CD14-positive monocyte (primary cell): ENCODE measurements at regions of chr11 and their contacts with region 1.

Region 1: DNA sequence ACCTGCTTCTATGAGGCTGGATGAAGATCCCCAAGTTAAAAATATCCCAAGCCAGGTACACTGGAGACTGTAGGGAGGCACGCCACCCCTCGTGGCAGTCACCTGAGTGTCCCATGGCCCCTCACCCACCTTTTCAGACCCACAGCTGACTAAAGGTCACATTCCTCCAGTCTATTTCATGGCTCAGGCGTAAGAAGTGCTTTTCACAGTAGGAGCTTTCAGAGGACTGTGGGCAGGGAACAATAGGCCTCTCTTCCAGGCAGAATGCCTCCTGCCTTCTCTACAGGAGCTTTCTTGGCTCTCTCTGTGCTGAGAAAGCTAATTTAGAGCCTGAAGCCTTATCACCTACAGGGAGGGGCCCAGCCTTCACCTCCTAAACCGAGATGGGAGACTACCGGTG is 73.8 kb downstream of the C11orf58 start:
- DNase-seq: no peak
- H3K4me3 ChIP-seq: no peak overlapping the region
- H3K4me3 Mint-ChIP-seq: no peak overlapping the region
- H3K27ac ChIP-seq: peak overlapping the region in 1 of 2 donors; percentile 79
- H3K27ac Mint-ChIP-seq: peak overlapping the region in 1 of 7 donors; percentile 7
- H3K4me1 ChIP-seq: peaks cover 89 to 91% of the 10 kb centered on the region in 2 donors
- H3K4me1 Mint-ChIP-seq: peaks cover 96% of the 10 kb centered on the region
- H3K27me3 ChIP-seq: no peaks in the 10 kb centered on the region
- H3K27me3 Mint-ChIP-seq: peaks cover 0 to 4% (median 2%) of the 10 kb centered on the region in 3 donors
- CTCF ChIP-seq: no peak

Region 2: DNA sequence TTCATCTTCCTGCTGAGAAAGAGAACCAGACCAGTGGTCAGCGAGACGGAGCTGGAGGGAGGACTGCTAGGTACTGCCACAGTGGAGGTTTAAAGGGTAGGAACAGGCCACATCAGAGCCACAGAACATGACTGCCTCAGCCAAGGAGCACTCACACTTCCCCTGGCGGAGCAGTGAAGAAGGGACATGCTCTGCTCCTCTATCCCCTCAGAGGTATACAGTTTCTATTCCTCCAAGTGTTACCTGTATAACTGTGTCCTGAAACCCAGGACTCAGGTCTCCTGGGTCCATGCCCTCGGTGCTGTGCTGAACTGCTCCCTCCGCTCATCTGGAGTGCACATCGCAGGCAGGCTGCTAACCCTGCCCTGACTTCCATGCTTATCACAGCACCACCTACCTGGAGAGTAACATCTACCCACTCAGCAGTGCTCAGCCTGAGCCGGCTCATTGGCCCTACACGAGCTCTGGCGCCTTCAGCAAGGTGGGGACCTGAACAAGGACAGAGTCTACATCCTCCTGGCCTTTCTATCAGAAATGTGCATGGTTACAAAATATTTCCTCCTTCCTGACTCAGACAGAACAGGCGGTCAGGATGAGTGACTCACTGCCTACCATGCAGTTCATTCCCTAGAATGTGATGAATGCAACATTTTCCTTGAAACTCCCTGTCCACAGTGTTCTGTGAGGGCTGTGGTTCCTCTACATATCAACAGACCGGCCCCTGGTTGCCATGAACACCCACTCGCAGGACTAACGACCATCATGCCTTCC is 20.9 kb before region 1 on chr11:
- intact Hi-C with region 1: loop called in 1 of 2 experiments (anchors 2 kb)
- DNase-seq: peak; percentile 80 to 93 (median 93)
- H3K4me3 ChIP-seq: peak overlapping the region in 1 of 3 experiments; percentile 18
- H3K4me3 Mint-ChIP-seq: peak overlapping the region; percentile 1 to 75
- H3K27ac ChIP-seq: peak overlapping the region; percentile 55 to 79
- H3K27ac Mint-ChIP-seq: peak overlapping the region; percentile 76 to 96 (median 89)
- H3K4me1 ChIP-seq: peaks cover 48 to 61% of the 10 kb centered on the region in 2 donors
- H3K4me1 Mint-ChIP-seq: peaks cover 54% of the 10 kb centered on the region
- H3K27me3 ChIP-seq: no peaks in the 10 kb centered on the region
- H3K27me3 Mint-ChIP-seq: no peaks in the 10 kb centered on the region
- CTCF ChIP-seq: peak; percentile 32